PC-9 (cell line): ENCODE measurements at regions of chr1 and their contacts with region 1.

Region 1: GRCh38 chr1:178417858-178418257 is 78.9 kb downstream of the CLEC20A start:
- DNase-seq: peak in 1 of 2 experiments; percentile 95
- H3K4me3 ChIP-seq: no peak overlapping the region
- H3K27ac ChIP-seq: peak overlapping the region; percentile 43
- H3K4me1 ChIP-seq: peaks cover 19% of the 10 kb centered on the region
- H3K27me3 ChIP-seq: no peaks in the 10 kb centered on the region
- CTCF ChIP-seq: no peak

Region 2: DNA sequence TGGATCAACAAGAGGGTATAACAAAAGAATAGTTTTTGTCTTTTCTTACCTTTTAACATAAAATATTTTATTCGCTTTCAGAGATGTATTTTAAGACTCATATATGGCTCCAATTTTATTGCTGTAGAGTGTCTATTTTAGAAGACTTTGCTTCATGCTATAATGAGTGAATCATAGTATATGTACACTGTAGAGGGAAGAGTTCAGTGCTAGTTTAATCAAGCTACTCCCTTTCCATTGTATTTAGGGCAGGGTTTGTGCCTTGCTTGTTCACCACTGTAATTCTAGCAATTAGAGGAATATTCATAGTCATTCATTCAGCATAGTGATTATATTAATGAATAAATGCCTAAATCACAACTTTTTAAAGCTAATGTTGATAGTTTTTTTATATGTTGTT is 1615.5 kb after region 1 on chr1:
- CTCF ChIA-PET with region 1: no interaction called
- POLR2A ChIA-PET with region 1: no interaction called
- intact Hi-C with region 1: loop called (anchors 10 kb)
- DNase-seq: no peak
- H3K4me3 ChIP-seq: no peak overlapping the region
- H3K27ac ChIP-seq: no peak overlapping the region
- H3K4me1 ChIP-seq: no peaks in the 10 kb centered on the region
- H3K27me3 ChIP-seq: no peaks in the 10 kb centered on the region
- CTCF ChIP-seq: no peak